ENCODE measurements at regions of chr1 and their contacts with region 1.

Region 1: GRCh38 chr1:26754086-26754874 is 33.5 kb upstream of the PIGV start:
- DNase-seq: no peak
- H3K4me3 ChIP-seq: no peak overlapping the region
- H3K27ac ChIP-seq: peak overlapping the region; percentile 89
- H3K4me1 ChIP-seq: peaks cover 76% of the 10 kb centered on the region
- H3K27me3 ChIP-seq: no peaks in the 10 kb centered on the region
- CTCF ChIP-seq: no peak

Region 2: DNA sequence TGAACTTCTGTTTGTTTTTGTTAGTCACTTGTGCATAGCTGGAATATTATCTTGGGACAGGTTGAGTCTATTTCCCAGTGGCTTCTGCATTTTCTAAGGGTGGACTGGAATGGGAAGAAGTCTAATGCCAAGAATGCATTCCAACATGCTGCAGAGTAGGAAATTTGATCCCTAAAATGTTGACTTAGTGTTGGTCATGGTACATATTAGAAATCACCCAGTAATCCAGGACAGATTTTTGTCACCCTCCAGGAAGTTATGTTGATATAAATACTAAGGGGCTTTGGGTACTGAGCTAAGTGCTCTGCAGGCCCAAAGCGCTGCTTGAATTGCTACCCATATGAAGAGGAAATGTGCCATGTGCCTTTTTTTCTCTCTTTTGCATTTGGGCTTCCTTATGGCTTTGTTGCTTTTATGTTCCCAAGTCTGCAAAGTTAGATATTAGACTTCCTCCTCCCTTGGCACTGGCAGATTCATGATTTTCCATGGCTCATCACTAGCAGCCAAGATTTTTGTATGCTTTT is 48.4 kb before region 1 on chr1:
- intact Hi-C with region 1: loop called (anchors 10 kb)
- DNase-seq: no peak
- H3K4me3 ChIP-seq: peak overlapping the region; percentile 5
- H3K27ac ChIP-seq: peak overlapping the region; percentile 47
- H3K4me1 ChIP-seq: peaks cover 94% of the 10 kb centered on the region
- H3K27me3 ChIP-seq: no peaks in the 10 kb centered on the region
- CTCF ChIP-seq: no peak

Region 3: GRCh38 chr1:26900001-26900814 is 145.9 kb after region 1 on chr1 and contains the start of gene GPATCH3:
- intact Hi-C with region 1: no loop called
- DNase-seq: peak; percentile 92
- H3K4me3 ChIP-seq: peak within 1 kb of the TSS; percentile 96
- H3K27ac ChIP-seq: peak within 1 kb of the TSS; percentile 90
- H3K4me1 ChIP-seq: peaks cover 38% of the 10 kb centered on the region
- H3K27me3 ChIP-seq: no peaks in the 10 kb centered on the region
- CTCF ChIP-seq: no peak
- total RNA-seq, gene GPATCH3: 7.9 TPM